GM12878 (cell line): ENCODE measurements at regions of chr4 and their contacts with region 1.

Region 1: DNA sequence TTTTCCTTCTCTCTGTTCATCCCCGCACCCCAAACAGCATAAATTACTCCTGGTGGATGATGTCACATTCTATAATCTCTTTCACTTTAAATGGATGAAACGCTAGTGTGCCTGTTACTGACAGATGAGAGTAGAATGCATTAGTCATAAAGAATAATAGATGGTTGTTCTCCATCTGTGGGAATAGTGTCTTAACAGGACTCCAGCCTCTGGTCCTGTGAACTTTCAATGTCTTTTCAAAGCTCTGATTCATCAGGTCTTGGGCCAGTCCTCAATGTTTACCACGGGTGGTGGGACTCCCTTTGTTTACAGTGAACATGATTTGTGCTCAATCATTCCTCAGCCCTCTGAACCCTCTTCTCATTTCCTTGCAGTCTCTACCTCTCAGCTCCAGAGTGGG is 182.6 kb downstream of the GABRB1 start:
- DNase-seq: no peak
- ATAC-seq: no peak; the same call in 2 of the 3 replicates
- H3K4me3 ChIP-seq: no peak overlapping the region
- H3K27ac ChIP-seq: no peak overlapping the region
- H3K4me1 ChIP-seq: no peaks in the 10 kb centered on the region
- H3K27me3 ChIP-seq: no peaks in the 10 kb centered on the region
- CTCF ChIP-seq: no peak
- EP300 ChIP-seq: no peak
- POLR2A ChIP-seq: no peak
- RAD21 ChIP-seq: no peak

Region 2: DNA sequence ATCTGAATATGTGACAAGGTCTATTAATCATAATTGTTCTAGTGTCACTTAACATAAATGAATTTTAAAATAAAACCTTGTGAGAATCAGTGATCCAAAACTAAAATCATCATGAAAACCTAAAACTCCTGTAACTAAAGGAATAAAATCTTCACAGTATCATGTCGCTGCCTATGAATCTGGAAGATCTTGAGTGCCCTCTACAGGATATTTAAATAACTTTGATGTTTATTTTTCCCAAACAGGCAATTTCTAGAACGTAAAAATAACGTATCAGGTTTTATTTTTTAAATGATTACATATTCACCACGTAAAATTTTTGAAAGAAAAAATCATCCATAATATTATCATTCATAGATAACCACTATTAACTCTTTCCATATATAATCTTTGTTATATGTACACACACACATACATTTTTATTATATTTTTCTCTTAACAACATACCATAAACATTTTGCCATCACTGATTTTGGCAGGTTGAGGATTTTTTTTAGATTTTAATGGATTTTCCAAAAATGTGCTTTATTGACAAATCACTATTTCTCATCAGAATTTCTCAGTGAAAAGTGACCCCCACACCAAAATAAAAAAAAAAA is 170.0 kb after region 1 on chr4:
- CTCF ChIA-PET with region 1: interaction called, 3 read pairs
- POLR2A ChIA-PET with region 1: no interaction called
- RAD21 ChIA-PET with region 1: no interaction called
- SMC1A ChIA-PET with region 1: interaction called, 3 read pairs
- in situ Hi-C with region 1: no loop called
- intact Hi-C with region 1: loop called (anchors 5 kb)
- DNase-seq: no peak
- ATAC-seq: peak; percentile 44; the same call in 2 of the 3 replicates
- H3K4me3 ChIP-seq: no peak overlapping the region
- H3K27ac ChIP-seq: no peak overlapping the region
- H3K4me1 ChIP-seq: no peaks in the 10 kb centered on the region
- H3K27me3 ChIP-seq: no peaks in the 10 kb centered on the region
- CTCF ChIP-seq: peak; percentile 19 to 59 (median 37); a peak in 4 of 6 replicates
- EP300 ChIP-seq: no peak
- POLR2A ChIP-seq: no peak
- RAD21 ChIP-seq: peak; percentile 83